ENCODE measurements at regions of chr4 and their contacts with region 1.

Region 1: GRCh38 chr4:99324979-99325378 is 3.8 kb upstream of the ADH1B start:
- DNase-seq: peak; percentile 83
- ATAC-seq: peak; percentile 81
- H3K4me3 ChIP-seq: no peak overlapping the region
- H3K27ac ChIP-seq: no peak overlapping the region; the same call in 1 of the 2 replicates
- H3K4me1 ChIP-seq: peaks cover 9% of the 10 kb centered on the region; the same call in 1 of the 2 replicates
- H3K27me3 ChIP-seq: no peaks in the 10 kb centered on the region
- CTCF ChIP-seq: no peak
- POLR2A ChIP-seq: no peak
- RAD21 ChIP-seq: no peak

Region 2: GRCh38 chr4:99383833-99384392 is 58.9 kb after region 1 on chr4:
- CTCF ChIA-PET with region 1: no interaction called
- POLR2A ChIA-PET with region 1: no interaction called
- dilution Hi-C with region 1: no loop called
- in situ Hi-C with region 1: no loop called
- intact Hi-C with region 1: loop called (anchors 5 kb)
- DNase-seq: peak; percentile 97
- ATAC-seq: peak; percentile 60
- H3K4me3 ChIP-seq: no peak overlapping the region
- H3K27ac ChIP-seq: peak overlapping the region; percentile 95; the same call in 1 of the 2 replicates
- H3K4me1 ChIP-seq: peaks cover 13% of the 10 kb centered on the region
- H3K27me3 ChIP-seq: no peaks in the 10 kb centered on the region
- CTCF ChIP-seq: no peak
- POLR2A ChIP-seq: no peak
- RAD21 ChIP-seq: no peak